ENCODE measurements at regions of chr11 and their contacts with region 1.

Region 1: DNA sequence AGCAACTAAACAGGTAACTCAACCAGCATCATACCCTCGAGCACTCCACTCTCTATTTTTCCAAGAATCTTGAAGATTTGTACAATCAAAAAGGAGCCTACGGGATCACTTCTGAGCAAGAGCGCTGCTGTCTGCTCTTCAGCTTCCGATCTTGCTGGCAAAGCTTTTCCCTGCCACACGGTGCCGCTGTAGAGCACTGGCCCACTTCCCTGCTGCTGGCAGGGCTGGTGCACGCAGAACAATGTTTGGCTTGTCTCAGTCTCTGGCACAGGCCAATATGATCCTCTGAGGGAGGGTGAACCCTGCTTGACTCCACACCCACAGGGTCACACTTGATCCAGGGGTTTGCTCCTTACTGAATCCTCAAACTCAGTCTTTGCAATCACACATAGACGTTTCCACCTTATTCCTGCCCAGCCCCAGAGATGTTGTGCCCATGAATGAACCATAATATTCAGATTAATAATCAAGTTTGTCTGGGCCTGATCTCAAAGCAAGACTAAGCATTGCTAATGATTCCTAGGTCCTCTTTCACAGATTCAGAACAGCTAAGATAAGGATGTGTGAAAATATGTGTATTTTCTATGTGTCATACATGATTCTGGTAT is 536.6 kb downstream of the SOX6 start:
- DNase-seq: peak; percentile 91

Region 2: GRCh38 chr11:15327786-15328231 is 492.0 kb before region 1 on chr11:
- intact Hi-C with region 1: loop called (anchors 10 kb)
- DNase-seq: peak; percentile 79

Region 3: DNA sequence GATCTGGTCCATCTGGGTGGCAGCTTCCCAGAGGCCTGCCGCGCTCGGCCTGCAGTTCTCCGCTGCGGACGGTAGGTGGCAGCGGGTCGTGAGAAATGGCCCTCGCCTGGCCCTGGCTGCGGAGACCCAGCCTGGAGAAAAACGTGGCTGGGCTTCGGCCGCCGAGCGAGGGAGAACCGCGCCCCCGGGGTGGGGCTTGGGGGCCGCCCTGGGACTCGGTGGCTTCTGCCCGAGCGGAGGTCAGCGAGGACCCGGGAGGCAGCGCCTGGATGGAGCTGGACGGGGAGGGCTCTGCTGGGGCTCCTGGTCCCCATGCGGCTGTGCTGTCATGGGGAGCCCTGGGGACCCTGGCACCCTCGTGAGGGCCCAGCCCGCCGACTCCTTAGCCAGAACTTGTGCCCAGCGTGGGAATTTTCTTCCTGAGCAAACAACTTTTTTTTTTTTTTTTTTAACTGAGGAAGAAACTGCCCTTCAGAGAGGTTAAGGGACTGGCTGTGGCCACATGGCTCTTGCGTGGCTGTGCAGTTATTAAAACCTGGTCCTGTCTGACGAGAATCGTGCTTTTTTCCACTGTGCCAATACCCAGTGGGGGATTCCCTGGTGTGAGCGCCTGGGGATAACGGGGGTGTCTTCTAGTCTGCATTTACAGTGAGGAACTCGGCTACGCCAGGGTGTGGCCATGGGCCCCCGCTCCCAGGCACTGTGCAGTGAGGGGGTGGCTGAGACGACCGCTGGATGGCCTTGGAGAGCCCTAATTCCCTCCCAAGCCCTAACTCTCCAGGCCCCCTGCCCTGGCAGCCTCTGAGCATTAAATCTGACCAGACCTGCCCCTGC is 169.5 kb before region 1 on chr11:
- intact Hi-C with region 1: loop called (anchors 2 kb)
- DNase-seq: peak; percentile 97

Region 4: DNA sequence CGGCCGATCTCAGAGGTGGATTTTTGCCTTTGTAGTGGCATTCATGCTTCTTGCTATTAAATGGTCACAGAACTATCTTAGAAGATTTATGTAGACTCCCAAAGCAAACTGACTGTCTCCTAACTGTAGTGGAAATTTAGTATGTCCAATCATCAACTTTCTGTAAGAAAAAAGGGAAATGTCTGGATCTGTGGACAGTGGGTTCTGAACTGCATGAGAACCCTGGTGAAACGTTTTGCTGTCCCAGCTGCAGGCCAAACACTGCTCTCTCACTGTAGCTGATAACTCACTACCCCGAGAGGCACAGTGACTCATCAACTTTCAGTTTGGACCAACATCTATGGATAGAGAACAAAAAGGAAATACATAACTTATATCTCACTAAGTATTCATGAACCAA is 149.5 kb after region 1 on chr11:
- intact Hi-C with region 1: loop called (anchors 10 kb)
- DNase-seq: peak; percentile 80

Region 5: DNA sequence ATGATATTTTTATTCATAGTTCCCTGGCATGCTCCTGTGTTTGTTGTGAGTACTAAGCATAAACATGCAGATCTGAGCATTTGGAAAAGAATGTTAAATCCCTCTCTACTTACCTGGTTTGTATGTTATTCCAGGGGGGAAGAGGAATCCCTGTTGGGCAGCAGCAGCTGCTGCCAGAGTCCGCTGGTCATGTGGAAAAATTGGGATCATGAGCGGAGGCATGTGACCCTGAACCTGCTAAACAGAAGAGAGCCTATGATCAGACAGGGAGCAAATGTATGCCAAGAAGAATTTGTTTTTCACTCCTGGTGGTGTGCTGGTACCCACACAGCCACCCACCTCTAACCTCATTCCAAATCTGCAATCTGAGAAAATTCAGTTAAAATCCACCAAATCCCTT is 291.9 kb after region 1 on chr11:
- intact Hi-C with region 1: loop called (anchors 10 kb)
- DNase-seq: no peak

Region 6: DNA sequence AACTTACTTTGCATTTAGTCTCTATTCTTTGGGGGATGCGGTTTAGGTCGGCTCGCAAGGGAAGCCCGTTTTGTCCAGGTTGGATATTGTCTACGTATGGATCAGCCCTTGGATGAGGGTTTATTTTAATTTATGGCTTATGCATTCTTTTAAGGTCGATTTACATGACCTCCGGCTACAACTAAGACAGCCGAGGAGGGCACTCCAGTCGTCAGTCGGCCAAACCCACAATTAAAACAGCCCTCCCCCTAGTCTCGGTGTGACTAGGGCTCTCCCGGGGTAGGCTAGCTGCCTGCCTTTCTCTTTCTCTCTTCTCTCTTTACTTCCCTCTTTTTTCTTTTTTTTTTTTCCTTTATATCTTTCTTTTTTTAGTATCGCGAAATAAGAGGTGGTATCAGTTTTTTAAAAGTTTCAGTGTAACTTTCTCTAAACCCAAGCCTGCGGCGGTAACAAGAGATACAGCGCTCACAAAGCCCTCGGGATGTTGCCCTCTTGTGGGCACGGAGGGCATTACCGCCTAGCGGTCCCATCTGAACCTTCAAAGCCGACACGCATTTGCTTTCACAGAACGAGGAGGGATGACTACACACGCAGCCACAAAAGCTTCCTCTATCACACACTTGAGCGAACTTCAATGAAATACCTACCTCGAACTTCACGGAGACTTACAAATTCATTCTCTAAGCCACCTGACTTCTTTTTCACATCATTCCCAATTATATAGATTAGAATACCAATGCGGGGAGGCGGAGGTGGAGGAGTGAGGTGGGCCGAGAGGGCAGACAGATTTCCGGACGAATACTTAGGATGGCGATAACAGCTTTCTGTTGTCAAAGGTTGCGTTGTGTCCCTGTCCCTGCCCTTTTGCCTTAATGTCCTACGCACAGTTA is 786.4 kb after region 1 on chr11:
- intact Hi-C with region 1: loop called (anchors 2 kb)
- DNase-seq: peak; percentile 93